Esophagus muscularis mucosa (tissue), 4 donors: ENCODE measurements at regions of chr6 and their contacts with region 1.

Region 1: GRCh38 chr6:146857180-146857979 is 258.6 kb downstream of the ADGB start:
- DNase-seq: peak; percentile 95
- H3K4me3 ChIP-seq: peak overlapping the region; percentile 34 to 56 (median 48)
- H3K27ac ChIP-seq: peak overlapping the region; percentile 55 to 67 (median 62)
- H3K4me1 ChIP-seq: peaks cover 3 to 21% (median 10%) of the 10 kb centered on the region in 4 donors
- H3K27me3 ChIP-seq: no peaks in the 10 kb centered on the region
- CTCF ChIP-seq: peak; percentile 96 to 99 (median 98)
- EP300 ChIP-seq: no peak
- POLR2A ChIP-seq: no peak

Region 2: GRCh38 chr6:147222160-147222838 is 364.9 kb after region 1 on chr6:
- intact Hi-C with region 1: loop called (anchors 10 kb)
- DNase-seq: no peak
- H3K4me3 ChIP-seq: no peak overlapping the region
- H3K27ac ChIP-seq: no peak overlapping the region
- H3K4me1 ChIP-seq: peaks cover 0 to 9% (median 4%) of the 10 kb centered on the region in 4 donors
- H3K27me3 ChIP-seq: no peaks in the 10 kb centered on the region
- CTCF ChIP-seq: peak in 2 of 3 experiments; percentile 25 to 55
- EP300 ChIP-seq: no peak
- POLR2A ChIP-seq: no peak

Region 3: GRCh38 chr6:147285087-147285855 is 427.9 kb after region 1 on chr6:
- intact Hi-C with region 1: loop called (anchors 5 kb)
- DNase-seq: no peak
- H3K4me3 ChIP-seq: no peak overlapping the region
- H3K27ac ChIP-seq: no peak overlapping the region
- H3K4me1 ChIP-seq: peaks cover 0 to 15% (median 7%) of the 10 kb centered on the region in 4 donors
- H3K27me3 ChIP-seq: no peaks in the 10 kb centered on the region
- CTCF ChIP-seq: peak; percentile 35 to 62 (median 53)
- EP300 ChIP-seq: no peak
- POLR2A ChIP-seq: no peak